ENCODE measurements at regions of chr7 and their contacts with region 1.

Region 1: DNA sequence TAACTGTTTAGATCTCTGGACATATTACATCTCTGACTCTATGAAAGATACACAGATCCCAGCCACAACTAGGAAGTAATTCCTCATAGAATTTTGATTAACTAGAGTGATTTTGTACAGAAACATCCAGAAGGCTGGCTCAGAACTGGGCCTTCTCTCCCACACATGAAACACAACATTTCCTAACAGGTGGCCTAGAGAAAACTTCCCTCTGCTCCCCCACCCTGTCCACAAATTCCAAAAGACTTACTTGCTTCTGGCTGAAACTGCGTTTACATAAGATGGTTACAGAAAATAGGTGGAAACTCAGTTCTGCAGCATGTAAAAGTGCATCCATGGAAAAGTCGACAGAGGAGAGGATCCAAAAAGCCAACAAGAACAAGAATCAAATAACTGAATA is 132.9 kb downstream of the FZD1 start:
- DNase-seq: no peak
- ATAC-seq: no peak
- H3K4me3 Mint-ChIP-seq: no peak overlapping the region
- H3K27ac Mint-ChIP-seq: no peak overlapping the region
- H3K4me1 Mint-ChIP-seq: no peaks in the 10 kb centered on the region
- H3K27me3 Mint-ChIP-seq: peaks cover 5% of the 10 kb centered on the region
- CTCF ChIP-seq: no peak

Region 2: GRCh38 chr7:93284908-93285307 is 1887.8 kb after region 1 on chr7:
- CTCF ChIA-PET with region 1: no interaction called
- POLR2A ChIA-PET with region 1: no interaction called
- intact Hi-C with region 1: loop called (anchors 10 kb)
- DNase-seq: no peak
- ATAC-seq: no peak
- H3K4me3 Mint-ChIP-seq: no peak overlapping the region
- H3K27ac Mint-ChIP-seq: no peak overlapping the region
- H3K4me1 Mint-ChIP-seq: no peaks in the 10 kb centered on the region
- H3K27me3 Mint-ChIP-seq: no peaks in the 10 kb centered on the region
- CTCF ChIP-seq: no peak